ENCODE measurements at regions of chr17 and their contacts with region 1.

Region 1: DNA sequence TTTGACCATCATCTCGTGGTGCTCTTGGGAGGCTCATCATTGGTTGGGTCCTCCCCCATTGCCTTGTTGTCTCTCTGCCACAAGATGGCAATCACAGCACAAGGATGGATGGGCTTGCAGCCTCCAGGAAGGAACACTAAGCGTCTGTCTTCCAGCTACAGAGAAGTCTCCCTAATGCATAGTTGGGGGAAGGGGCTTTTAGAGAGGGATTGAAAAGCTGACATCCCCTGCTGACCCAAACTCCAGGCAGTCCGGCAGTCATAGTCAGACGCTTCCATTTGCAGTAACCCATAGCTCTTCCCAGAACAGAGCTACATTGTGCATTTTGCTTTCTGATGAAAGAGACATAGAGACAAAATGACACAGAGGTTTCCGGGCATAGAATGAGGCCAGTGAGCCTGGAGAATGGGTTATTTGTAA is 111.4 kb downstream of the UTP18 start:
- DNase-seq: peak; percentile 78
- H3K4me3 Mint-ChIP-seq: peak overlapping the region; percentile 31
- H3K27ac Mint-ChIP-seq: no peak overlapping the region
- H3K4me1 Mint-ChIP-seq: peaks cover 20% of the 10 kb centered on the region
- H3K27me3 Mint-ChIP-seq: no peaks in the 10 kb centered on the region

Region 2: GRCh38 chr17:51298508-51299371 is 73.0 kb before region 1 on chr17:
- CTCF ChIA-PET with region 1: interaction called, 4 read pairs
- intact Hi-C with region 1: loop called (anchors 2 kb)
- DNase-seq: no peak
- H3K4me3 Mint-ChIP-seq: no peak overlapping the region
- H3K27ac Mint-ChIP-seq: no peak overlapping the region
- H3K4me1 Mint-ChIP-seq: peaks cover 1% of the 10 kb centered on the region
- H3K27me3 Mint-ChIP-seq: no peaks in the 10 kb centered on the region

Region 3: GRCh38 chr17:51427856-51428255 is 56.1 kb after region 1 on chr17:
- CTCF ChIA-PET with region 1: interaction called, 6 read pairs
- intact Hi-C with region 1: loop called (anchors 2 kb)
- DNase-seq: peak; percentile 92
- H3K4me3 Mint-ChIP-seq: peak overlapping the region; percentile 48
- H3K27ac Mint-ChIP-seq: peak overlapping the region; percentile 93
- H3K4me1 Mint-ChIP-seq: peaks cover 65% of the 10 kb centered on the region
- H3K27me3 Mint-ChIP-seq: no peaks in the 10 kb centered on the region

Region 4: GRCh38 chr17:51533219-51533618 is 161.5 kb after region 1 on chr17:
- CTCF ChIA-PET with region 1: interaction called, 89 read pairs
- intact Hi-C with region 1: loop called (anchors 1 kb)
- DNase-seq: no peak
- H3K4me3 Mint-ChIP-seq: no peak overlapping the region
- H3K27ac Mint-ChIP-seq: no peak overlapping the region
- H3K4me1 Mint-ChIP-seq: no peaks in the 10 kb centered on the region
- H3K27me3 Mint-ChIP-seq: no peaks in the 10 kb centered on the region

Region 5: DNA sequence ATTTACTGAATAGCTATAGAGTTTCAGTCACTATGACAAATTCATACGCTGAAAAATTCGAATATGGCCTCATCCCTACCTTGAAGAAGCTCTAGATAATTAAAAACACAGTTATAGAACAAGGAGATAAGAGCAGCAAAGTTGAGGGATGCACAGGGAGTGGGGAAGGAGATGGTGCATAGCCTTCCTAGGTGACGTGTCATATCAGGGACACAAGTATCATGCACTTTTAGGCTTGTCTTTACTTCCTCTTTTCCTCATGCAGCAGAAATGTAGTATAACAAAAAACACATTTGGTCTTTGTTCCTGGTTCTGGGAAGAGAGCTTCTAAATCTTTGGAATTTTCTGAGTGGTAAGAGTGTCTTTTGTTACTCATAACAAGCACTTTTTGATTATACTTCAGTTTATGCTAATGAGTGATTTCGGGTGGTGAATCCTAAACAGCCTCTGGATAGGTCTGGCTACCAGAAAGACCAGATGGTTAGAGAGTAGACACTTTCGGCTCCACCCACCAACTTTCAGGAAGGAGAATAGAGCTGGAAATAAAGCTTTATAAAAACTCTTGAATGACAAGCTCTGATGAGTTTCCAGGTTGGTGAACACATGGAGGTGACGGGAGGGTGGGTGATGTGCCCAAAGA is 230.0 kb after region 1 on chr17:
- CTCF ChIA-PET with region 1: no interaction called
- intact Hi-C with region 1: no loop called
- DNase-seq: no peak
- H3K4me3 Mint-ChIP-seq: no peak overlapping the region
- H3K27ac Mint-ChIP-seq: no peak overlapping the region
- H3K4me1 Mint-ChIP-seq: no peaks in the 10 kb centered on the region
- H3K27me3 Mint-ChIP-seq: no peaks in the 10 kb centered on the region

Region 6: GRCh38 chr17:51640108-51640622 is 268.4 kb after region 1 on chr17:
- CTCF ChIA-PET with region 1: interaction called, 16 read pairs
- intact Hi-C with region 1: loop called (anchors 1 kb)
- DNase-seq: peak; percentile 21
- H3K4me3 Mint-ChIP-seq: no peak overlapping the region
- H3K27ac Mint-ChIP-seq: no peak overlapping the region
- H3K4me1 Mint-ChIP-seq: no peaks in the 10 kb centered on the region
- H3K27me3 Mint-ChIP-seq: peaks cover 12% of the 10 kb centered on the region

Region 7: GRCh38 chr17:51764387-51764972 is 392.7 kb after region 1 on chr17:
- CTCF ChIA-PET with region 1: interaction called, 6 read pairs
- intact Hi-C with region 1: loop called (anchors 1 kb)
- DNase-seq: peak; percentile 68
- H3K4me3 Mint-ChIP-seq: no peak overlapping the region
- H3K27ac Mint-ChIP-seq: no peak overlapping the region
- H3K4me1 Mint-ChIP-seq: no peaks in the 10 kb centered on the region
- H3K27me3 Mint-ChIP-seq: peaks cover 22% of the 10 kb centered on the region